ENCODE measurements at regions of chr4 and their contacts with region 1.

Region 1: GRCh38 chr4:188383180-188383579 is 243.9 kb downstream of the TRIML1 start:
- DNase-seq: no peak
- ATAC-seq: no peak
- H3K4me3 ChIP-seq: no peak overlapping the region
- H3K27ac ChIP-seq: no peak overlapping the region
- H3K4me1 ChIP-seq: no peaks in the 10 kb centered on the region
- H3K27me3 ChIP-seq: no peaks in the 10 kb centered on the region
- CTCF ChIP-seq: no peak

Region 2: GRCh38 chr4:187128222-187128621 is 1255.0 kb before region 1 on chr4:
- intact Hi-C with region 1: loop called in 1 of 10 experiments (anchors 5 kb)
- DNase-seq: no peak
- ATAC-seq: no peak
- H3K4me3 ChIP-seq: no peak overlapping the region
- H3K27ac ChIP-seq: no peak overlapping the region
- H3K4me1 ChIP-seq: no peaks in the 10 kb centered on the region
- H3K27me3 ChIP-seq: no peaks in the 10 kb centered on the region
- CTCF ChIP-seq: no peak

Region 3: DNA sequence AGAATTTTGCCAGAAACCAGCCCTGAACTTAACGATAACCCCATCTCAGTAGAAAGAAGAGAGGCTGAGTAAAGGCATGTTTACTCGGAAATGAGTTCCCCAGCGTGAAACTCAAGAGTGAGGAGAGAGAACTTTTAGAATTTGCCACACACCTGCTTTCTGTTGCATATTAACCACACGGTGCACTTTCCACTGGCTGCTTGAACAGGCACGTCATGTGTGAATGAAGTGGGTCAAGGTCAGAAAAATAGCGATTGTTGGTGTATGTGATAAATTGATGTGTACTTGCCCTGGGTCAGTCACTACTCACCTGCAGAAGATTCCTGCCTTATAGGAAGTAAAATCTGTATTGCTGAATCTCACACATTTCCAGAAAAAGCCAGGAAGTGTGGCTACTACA is 151.7 kb after region 1 on chr4:
- intact Hi-C with region 1: no loop called
- DNase-seq: no peak
- ATAC-seq: no peak
- H3K4me3 ChIP-seq: no peak overlapping the region
- H3K27ac ChIP-seq: no peak overlapping the region
- H3K4me1 ChIP-seq: no peaks in the 10 kb centered on the region
- H3K27me3 ChIP-seq: no peaks in the 10 kb centered on the region
- CTCF ChIP-seq: no peak